ENCODE measurements at regions of chr6 and their contacts with region 1.

Region 1: DNA sequence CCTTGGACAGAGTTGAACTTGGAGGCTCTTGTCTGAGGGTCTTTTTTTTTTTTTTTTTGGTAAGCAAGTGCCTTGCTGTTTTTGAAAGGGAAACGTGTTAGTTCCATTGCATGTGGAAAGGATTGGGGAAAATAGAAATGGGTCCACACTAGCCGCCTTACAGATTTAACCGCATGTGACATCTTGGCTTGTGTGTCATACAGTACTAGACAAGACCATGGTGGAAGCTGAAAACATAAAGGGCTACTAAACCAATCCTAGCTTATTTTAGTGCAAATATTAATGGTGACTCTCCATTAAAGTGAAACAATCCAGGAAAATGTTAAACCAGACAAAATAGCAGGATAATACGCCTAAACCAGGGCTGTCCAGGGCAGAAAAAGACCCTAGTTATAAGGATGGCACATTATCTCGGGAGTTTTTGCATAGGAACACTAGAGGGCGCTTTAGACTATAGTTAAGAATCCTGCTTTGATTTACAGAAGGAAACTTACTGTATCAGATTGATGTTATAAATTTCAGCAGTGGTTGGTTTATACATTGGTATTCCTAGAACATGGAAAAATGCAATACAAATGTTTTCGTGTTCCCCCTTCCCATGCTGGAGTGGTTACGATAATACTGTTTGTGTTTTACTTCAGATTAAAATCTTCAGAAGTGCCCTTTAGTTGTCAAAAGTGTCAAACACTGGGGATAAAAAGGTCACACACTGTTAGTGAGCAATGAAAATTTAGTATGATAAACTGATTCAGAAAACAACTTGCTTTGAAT is 59.8 kb upstream of the DEK start:
- DNase-seq: peak; percentile 35
- ATAC-seq: peak; percentile 44
- H3K4me3 Mint-ChIP-seq: no peak overlapping the region
- H3K27ac Mint-ChIP-seq: no peak overlapping the region
- H3K4me1 Mint-ChIP-seq: peaks cover 4% of the 10 kb centered on the region
- H3K27me3 Mint-ChIP-seq: peaks cover 7% of the 10 kb centered on the region

Region 2: GRCh38 chr6:18393698-18394097 is 69.6 kb after region 1 on chr6:
- CTCF ChIA-PET with region 1: no interaction called
- POLR2A ChIA-PET with region 1: no interaction called
- DNase-seq: no peak
- ATAC-seq: no peak
- H3K4me3 Mint-ChIP-seq: no peak overlapping the region
- H3K27ac Mint-ChIP-seq: no peak overlapping the region
- H3K4me1 Mint-ChIP-seq: peaks cover 13% of the 10 kb centered on the region
- H3K27me3 Mint-ChIP-seq: no peaks in the 10 kb centered on the region

Region 3: GRCh38 chr6:18503593-18504231 is 179.6 kb after region 1 on chr6:
- CTCF ChIA-PET with region 1: interaction called, 80 read pairs
- POLR2A ChIA-PET with region 1: no interaction called
- DNase-seq: peak; percentile 51
- ATAC-seq: no peak
- H3K4me3 Mint-ChIP-seq: no peak overlapping the region
- H3K27ac Mint-ChIP-seq: no peak overlapping the region
- H3K4me1 Mint-ChIP-seq: peaks cover 4% of the 10 kb centered on the region
- H3K27me3 Mint-ChIP-seq: peaks cover 2% of the 10 kb centered on the region

Measured in activated CD8-positive, alpha-beta T cell treated with anti-CD3 and anti-CD28 coated beads, Interleukin-2, amount 10 ng/mL, durations not matched to agents 7 days and 5 days (primary cell).